MCF 10A (cell line): ENCODE measurements at regions of chrX and their contacts with region 1.

Region 1: GRCh38 chrX:153953342-153953830 is 8.9 kb upstream of the RENBP start:
- DNase-seq: peak; percentile 61
- H3K4me3 Mint-ChIP-seq: no peak overlapping the region
- H3K27ac Mint-ChIP-seq: no peak overlapping the region
- H3K4me1 Mint-ChIP-seq: no peaks in the 10 kb centered on the region
- H3K27me3 Mint-ChIP-seq: no peaks in the 10 kb centered on the region
- CTCF ChIP-seq: peak; percentile 96

Region 2: GRCh38 chrX:153934473-153935325 is 18.7 kb before region 1 on chrX and contains the start of gene NAA10:
- CTCF ChIA-PET with region 1: interaction called, 15 read pairs
- POLR2A ChIA-PET with region 1: no interaction called
- intact Hi-C with region 1: no loop called
- DNase-seq: peak; percentile 63
- H3K4me3 Mint-ChIP-seq: peak within 1 kb of the TSS; percentile 76
- H3K27ac Mint-ChIP-seq: no peak within 1 kb of the TSS
- H3K4me1 Mint-ChIP-seq: no peaks in the 10 kb centered on the region
- H3K27me3 Mint-ChIP-seq: peaks cover 28% of the 10 kb centered on the region
- CTCF ChIP-seq: no peak
- total RNA-seq, gene NAA10: 166 and 196 TPM in 2 replicates

Region 3: DNA sequence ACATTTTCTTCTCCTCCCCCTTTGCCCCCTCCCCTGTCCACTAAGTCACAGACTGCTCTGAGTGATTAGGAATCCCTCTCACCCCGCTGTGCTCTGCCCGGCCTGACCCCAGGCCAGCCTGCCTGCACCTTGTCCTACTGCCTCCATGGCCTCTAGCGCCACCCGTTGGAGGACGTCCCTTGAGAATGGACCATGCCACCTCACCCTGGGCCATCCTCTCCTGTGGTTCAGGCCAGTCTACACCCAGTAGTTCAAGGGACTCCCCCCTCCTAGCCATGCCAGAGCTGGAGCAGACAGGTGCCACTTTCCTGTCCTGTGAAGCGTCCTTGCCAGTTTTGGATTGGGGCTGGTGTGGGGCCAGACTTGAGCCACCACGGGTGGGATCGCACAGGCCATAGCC is 76.1 kb after region 1 on chrX:
- CTCF ChIA-PET with region 1: no interaction called
- POLR2A ChIA-PET with region 1: no interaction called
- intact Hi-C with region 1: no loop called
- DNase-seq: no peak
- H3K4me3 Mint-ChIP-seq: no peak overlapping the region
- H3K27ac Mint-ChIP-seq: no peak overlapping the region
- H3K4me1 Mint-ChIP-seq: no peaks in the 10 kb centered on the region
- H3K27me3 Mint-ChIP-seq: peaks cover 61% of the 10 kb centered on the region
- CTCF ChIP-seq: no peak